AG04449 (cell line): ENCODE measurements at regions of chr4 and their contacts with region 1.

Region 1: DNA sequence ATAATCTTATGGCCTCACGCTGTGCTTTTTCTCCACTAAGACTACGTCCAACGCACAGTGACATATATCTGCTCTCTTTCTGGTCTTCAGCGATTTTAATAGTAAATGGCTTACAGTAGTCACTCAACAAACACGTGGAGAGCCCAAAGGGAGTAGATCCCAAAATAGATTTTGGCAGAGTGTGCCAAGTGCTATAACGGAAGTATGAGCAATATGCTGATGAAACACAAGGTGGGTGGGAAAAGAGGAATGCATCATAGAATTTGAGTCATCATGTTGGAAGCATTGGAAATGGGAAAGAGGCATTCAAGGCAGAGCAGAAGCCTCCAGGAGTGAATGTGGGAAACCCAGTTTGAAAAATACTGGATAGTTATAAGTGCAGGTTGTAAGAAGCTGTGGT is 129.1 kb upstream of the LDB2 start:
- DNase-seq: peak; percentile 95
- H3K4me3 ChIP-seq: no peak overlapping the region
- CTCF ChIP-seq: no peak

Region 2: GRCh38 chr4:16807355-16807754 is 220.1 kb before region 1 on chr4:
- CTCF ChIA-PET with region 1: no interaction called
- POLR2A ChIA-PET with region 1: no interaction called
- DNase-seq: no peak
- H3K4me3 ChIP-seq: no peak overlapping the region
- CTCF ChIP-seq: no peak

Region 3: GRCh38 chr4:17013382-17014006 is 14.0 kb before region 1 on chr4:
- CTCF ChIA-PET with region 1: interaction called, 10 read pairs
- POLR2A ChIA-PET with region 1: no interaction called
- DNase-seq: peak; percentile 51
- H3K4me3 ChIP-seq: no peak overlapping the region
- CTCF ChIP-seq: no peak